Right ventricle myocardium inferior (tissue), 1 donor: ENCODE measurements at regions of chr17 and their contacts with region 1.

Region 1: GRCh38 chr17:66737524-66737923 is 97.4 kb upstream of the CACNG5 start:
- DNase-seq: no peak
- ATAC-seq: peak; percentile 98

Region 2: GRCh38 chr17:66691644-66692420 is 45.7 kb before region 1 on chr17:
- intact Hi-C with region 1: loop called (anchors 2 kb)
- DNase-seq: no peak
- ATAC-seq: no peak

Region 3: DNA sequence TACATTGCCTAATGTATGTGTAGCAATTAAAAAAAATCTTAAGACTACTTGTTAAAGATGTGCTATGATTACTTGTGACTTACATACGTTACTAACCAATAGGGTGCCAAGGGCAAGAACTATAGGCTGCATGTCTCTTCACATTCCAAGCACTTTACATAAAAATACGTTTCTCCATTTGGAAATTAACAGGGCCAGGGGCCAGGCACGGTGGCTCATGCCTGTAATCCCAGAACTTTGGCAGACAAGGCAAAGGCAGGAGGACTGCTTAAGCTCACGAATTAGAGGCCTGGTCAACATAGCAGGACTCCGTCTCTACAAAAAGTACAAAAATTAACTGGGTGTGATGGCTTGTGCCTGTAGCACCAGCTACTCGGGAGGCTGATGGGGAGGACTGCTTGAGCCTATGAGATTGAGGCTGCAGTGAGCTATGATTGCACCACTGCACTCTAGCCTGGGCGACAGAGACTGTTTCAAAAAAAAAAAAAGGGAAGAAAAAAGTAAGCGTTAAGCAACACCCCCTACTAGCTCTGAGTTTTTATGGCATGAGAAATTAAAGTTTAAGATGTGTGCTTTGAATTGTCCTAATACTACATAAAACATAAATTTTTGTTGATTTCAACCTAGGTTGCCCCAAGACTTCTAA is 616.5 kb after region 1 on chr17:
- intact Hi-C with region 1: no loop called
- DNase-seq: no peak
- ATAC-seq: no peak

Region 4: DNA sequence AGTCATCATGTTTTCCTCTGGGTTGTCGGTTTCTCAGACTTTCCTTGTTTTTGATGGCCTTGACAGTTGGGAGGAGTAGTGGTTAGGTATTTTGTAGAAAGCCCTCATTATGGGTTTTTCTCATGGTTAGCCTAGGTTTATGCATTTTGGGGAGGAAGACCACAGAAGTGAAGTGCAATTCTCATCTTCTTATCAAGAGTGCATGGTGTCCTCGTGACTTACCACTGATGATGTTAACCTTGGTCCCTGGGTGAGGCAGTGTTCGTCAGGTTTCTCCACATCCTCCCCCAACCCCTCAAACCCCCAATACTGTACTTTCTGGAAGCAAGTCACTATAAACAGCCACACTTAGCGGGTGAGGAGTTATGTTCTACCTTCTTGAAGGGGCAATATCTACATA is 1130.1 kb after region 1 on chr17:
- intact Hi-C with region 1: no loop called
- DNase-seq: no peak
- ATAC-seq: no peak